ENCODE measurements at regions of chr15 and their contacts with region 1.

Region 1: GRCh38 chr15:78872972-78873792 is 492 bp downstream of the MORF4L1 start:
- DNase-seq: peak; percentile 90
- H3K4me3 Mint-ChIP-seq: peak overlapping the region; percentile 98
- H3K27ac Mint-ChIP-seq: peak overlapping the region; percentile 100
- H3K4me1 Mint-ChIP-seq: peaks cover 23% of the 10 kb centered on the region
- H3K27me3 Mint-ChIP-seq: no peaks in the 10 kb centered on the region
- CTCF ChIP-seq: peak; percentile 4

Region 2: DNA sequence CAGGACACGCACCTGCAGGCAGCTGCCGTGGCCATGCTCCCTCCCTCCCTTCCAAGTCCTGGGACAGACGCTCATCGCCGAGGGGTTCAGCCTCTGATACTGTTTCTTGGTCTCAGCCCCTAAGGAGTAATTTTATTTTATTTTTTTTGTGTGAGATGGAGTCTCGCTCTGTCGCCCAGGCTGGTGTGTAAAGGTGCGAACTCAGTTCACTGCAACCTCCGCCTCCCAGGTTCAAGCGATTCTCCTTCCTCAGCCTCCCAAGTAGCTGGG is 115.6 kb before region 1 on chr15:
- CTCF ChIA-PET with region 1: no interaction called
- POLR2A ChIA-PET with region 1: interaction called, 5 read pairs
- intact Hi-C with region 1: loop called (anchors 5 kb)
- DNase-seq: no peak
- H3K4me3 Mint-ChIP-seq: no peak overlapping the region
- H3K27ac Mint-ChIP-seq: no peak overlapping the region
- H3K4me1 Mint-ChIP-seq: peaks cover 17% of the 10 kb centered on the region
- H3K27me3 Mint-ChIP-seq: no peaks in the 10 kb centered on the region
- CTCF ChIP-seq: no peak

Region 3: DNA sequence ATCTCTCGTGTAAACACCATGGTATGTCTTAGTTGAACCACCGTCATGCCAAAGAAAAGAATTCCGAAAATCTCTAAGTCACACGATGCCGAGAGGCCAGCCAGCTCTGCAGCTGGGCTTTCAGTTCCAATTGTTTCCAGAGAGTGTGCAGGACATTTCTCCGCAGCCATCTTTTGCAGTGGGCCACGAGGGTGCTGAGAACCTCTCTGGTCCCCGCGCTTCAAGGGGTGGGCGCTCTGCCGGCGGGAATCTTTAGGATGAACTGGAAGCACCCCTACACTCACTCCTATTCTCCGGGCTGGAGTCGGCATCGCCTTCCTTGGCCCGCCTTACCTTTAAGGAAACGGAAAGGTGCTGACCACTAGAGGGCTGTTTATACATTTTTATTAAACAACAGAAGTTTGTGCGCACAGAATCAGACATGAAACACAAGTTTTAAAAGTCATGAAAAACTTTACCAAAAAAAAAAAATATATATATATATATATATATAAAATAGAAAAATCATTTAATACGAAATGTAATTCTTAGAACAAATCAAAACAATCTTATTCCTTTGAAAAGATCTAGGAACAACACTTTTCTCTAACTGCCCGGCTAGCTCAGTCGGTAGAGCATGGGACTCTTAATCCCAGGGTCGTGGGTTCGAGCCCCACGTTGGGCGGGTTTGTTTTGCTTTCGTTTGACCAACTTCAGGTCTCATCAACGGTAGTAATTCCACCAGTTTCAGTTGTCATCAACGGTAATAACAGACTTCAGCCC is 13.0 kb before region 1 on chr15:
- CTCF ChIA-PET with region 1: interaction called, 5 read pairs
- POLR2A ChIA-PET with region 1: interaction called, 14 read pairs
- intact Hi-C with region 1: no loop called
- DNase-seq: peak; percentile 84
- H3K4me3 Mint-ChIP-seq: peak overlapping the region; percentile 77
- H3K27ac Mint-ChIP-seq: peak overlapping the region; percentile 72
- H3K4me1 Mint-ChIP-seq: no peaks in the 10 kb centered on the region
- H3K27me3 Mint-ChIP-seq: no peaks in the 10 kb centered on the region
- CTCF ChIP-seq: peak; percentile 48

Region 4: GRCh38 chr15:78893538-78893937 is 20.4 kb after region 1 on chr15:
- CTCF ChIA-PET with region 1: interaction called, 3 read pairs
- POLR2A ChIA-PET with region 1: interaction called, 11 read pairs
- intact Hi-C with region 1: no loop called
- DNase-seq: no peak
- H3K4me3 Mint-ChIP-seq: no peak overlapping the region
- H3K27ac Mint-ChIP-seq: no peak overlapping the region
- H3K4me1 Mint-ChIP-seq: peaks cover 6% of the 10 kb centered on the region
- H3K27me3 Mint-ChIP-seq: no peaks in the 10 kb centered on the region
- CTCF ChIP-seq: no peak